Activated CD4-positive, alpha-beta memory T cell treated with anti-CD3 and anti-CD28 coated beads for 36 hours (primary cell): ENCODE measurements at regions of chr13 and their contacts with region 1.

Region 1: DNA sequence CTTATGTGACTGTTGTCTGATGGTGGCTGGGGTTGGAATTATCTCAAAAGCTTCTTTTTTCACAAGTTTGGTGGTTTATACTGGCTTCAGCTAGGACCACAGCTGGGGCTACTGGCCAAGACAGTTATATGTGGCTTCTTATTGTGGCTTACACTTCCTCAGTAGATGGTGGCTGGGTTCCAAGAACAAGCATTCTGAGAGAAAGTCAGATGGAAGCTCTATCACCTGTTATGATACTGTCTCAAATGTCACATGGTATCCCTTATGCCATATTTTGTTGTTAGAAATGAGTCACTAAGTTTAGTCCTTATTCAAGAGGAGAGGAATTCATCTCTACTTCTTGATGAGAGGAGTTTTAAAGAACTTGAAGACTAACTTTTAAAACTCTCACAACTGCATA is 41.6 kb downstream of the NDFIP2 start:
- DNase-seq: peak; percentile 55
- H3K4me3 Mint-ChIP-seq: peak overlapping the region; percentile 4
- H3K27ac Mint-ChIP-seq: peak overlapping the region; percentile 80
- H3K4me1 Mint-ChIP-seq: peaks cover 22% of the 10 kb centered on the region
- H3K27me3 Mint-ChIP-seq: no peaks in the 10 kb centered on the region

Region 2: GRCh38 chr13:78658635-78659449 is 863.7 kb before region 1 on chr13 and contains the start of gene OBI1:
- CTCF ChIA-PET with region 1: no interaction called
- POLR2A ChIA-PET with region 1: no interaction called
- intact Hi-C with region 1: loop called (anchors 5 kb)
- DNase-seq: peak; percentile 93
- H3K4me3 Mint-ChIP-seq: peak within 1 kb of the TSS; percentile 97
- H3K27ac Mint-ChIP-seq: peak within 1 kb of the TSS; percentile 91
- H3K4me1 Mint-ChIP-seq: peaks cover 29% of the 10 kb centered on the region
- H3K27me3 Mint-ChIP-seq: no peaks in the 10 kb centered on the region
- total RNA-seq, gene OBI1: 17.6 TPM

Region 3: DNA sequence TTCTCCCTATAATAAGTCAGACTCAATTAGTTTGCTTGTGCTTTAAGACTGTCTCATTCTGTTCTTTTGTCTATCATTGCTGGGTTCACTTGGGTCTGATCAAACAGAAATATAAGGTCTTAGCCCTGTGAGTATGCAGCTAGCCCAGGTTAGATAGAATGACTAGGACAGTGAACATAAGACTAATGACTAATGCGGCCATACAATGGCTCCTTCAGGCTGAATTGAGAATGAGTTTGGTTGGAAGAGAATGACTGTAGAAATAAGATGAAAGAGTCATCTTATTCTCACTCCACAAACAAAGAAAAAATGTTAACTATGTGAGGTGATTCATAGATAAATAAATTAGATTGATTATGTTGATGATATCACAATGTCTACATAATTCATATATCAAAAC is 813.6 kb before region 1 on chr13:
- CTCF ChIA-PET with region 1: no interaction called
- POLR2A ChIA-PET with region 1: no interaction called
- intact Hi-C with region 1: no loop called
- DNase-seq: no peak
- H3K4me3 Mint-ChIP-seq: no peak overlapping the region
- H3K27ac Mint-ChIP-seq: no peak overlapping the region
- H3K4me1 Mint-ChIP-seq: no peaks in the 10 kb centered on the region
- H3K27me3 Mint-ChIP-seq: peaks cover 11% of the 10 kb centered on the region

Region 4: GRCh38 chr13:78993792-78994191 is 528.8 kb before region 1 on chr13:
- CTCF ChIA-PET with region 1: no interaction called
- POLR2A ChIA-PET with region 1: no interaction called
- intact Hi-C with region 1: no loop called
- DNase-seq: no peak
- H3K4me3 Mint-ChIP-seq: no peak overlapping the region
- H3K27ac Mint-ChIP-seq: no peak overlapping the region
- H3K4me1 Mint-ChIP-seq: no peaks in the 10 kb centered on the region
- H3K27me3 Mint-ChIP-seq: peaks cover 6% of the 10 kb centered on the region

Region 5: DNA sequence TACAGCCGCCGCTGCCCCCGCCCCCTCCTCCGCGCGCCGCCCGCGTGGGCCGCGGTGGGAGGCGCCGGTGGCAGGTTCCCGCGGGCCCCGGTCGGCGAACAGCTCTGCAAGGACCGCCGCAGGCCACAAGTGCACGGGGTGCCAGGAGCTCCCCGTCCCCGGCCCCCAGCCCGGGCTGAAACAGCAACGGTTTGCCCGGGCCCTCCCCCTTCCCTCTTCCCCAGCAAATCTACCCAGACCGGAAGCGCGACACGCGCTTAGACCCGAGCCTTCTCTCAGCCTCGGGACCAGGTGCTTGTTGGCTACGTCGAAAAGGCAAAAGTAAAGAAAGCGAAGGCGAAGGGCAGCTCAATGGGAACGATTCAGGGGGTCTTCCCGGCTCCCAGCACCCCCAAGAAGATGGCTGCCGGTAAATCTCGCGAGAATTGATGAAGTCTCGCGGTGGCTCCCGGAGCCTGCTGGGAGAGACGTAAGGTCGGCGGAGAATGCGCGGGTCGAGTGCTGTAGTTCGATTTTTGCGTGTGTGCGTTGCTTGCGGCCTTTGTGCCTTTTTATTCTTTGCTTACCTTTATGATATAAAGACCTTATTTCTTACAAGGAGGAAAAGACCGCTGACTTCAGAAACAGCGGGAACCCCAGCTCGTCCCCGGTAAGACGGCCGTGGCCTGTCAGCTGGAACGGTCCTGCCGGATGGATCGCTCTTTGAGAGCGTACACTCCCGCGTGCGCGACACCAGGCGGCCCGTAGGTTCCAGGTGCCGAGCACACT is 116.6 kb before region 1 on chr13 and contains the start of gene RBM26:
- CTCF ChIA-PET with region 1: no interaction called
- POLR2A ChIA-PET with region 1: no interaction called
- intact Hi-C with region 1: loop called (anchors 5 kb)
- DNase-seq: peak; percentile 96
- H3K4me3 Mint-ChIP-seq: peak within 1 kb of the TSS; percentile 88
- H3K27ac Mint-ChIP-seq: no peak within 1 kb of the TSS
- H3K4me1 Mint-ChIP-seq: peaks cover 38% of the 10 kb centered on the region
- H3K27me3 Mint-ChIP-seq: no peaks in the 10 kb centered on the region
- total RNA-seq, gene RBM26: 54.8 to 57.7 TPM

Region 6: GRCh38 chr13:79451500-79451962 is 71.1 kb before region 1 on chr13:
- CTCF ChIA-PET with region 1: no interaction called
- POLR2A ChIA-PET with region 1: no interaction called
- intact Hi-C with region 1: loop called (anchors 1 kb)
- DNase-seq: peak; percentile 98
- H3K4me3 Mint-ChIP-seq: peak overlapping the region; percentile 74
- H3K27ac Mint-ChIP-seq: peak overlapping the region; percentile 97
- H3K4me1 Mint-ChIP-seq: peaks cover 84% of the 10 kb centered on the region
- H3K27me3 Mint-ChIP-seq: no peaks in the 10 kb centered on the region

Region 7: DNA sequence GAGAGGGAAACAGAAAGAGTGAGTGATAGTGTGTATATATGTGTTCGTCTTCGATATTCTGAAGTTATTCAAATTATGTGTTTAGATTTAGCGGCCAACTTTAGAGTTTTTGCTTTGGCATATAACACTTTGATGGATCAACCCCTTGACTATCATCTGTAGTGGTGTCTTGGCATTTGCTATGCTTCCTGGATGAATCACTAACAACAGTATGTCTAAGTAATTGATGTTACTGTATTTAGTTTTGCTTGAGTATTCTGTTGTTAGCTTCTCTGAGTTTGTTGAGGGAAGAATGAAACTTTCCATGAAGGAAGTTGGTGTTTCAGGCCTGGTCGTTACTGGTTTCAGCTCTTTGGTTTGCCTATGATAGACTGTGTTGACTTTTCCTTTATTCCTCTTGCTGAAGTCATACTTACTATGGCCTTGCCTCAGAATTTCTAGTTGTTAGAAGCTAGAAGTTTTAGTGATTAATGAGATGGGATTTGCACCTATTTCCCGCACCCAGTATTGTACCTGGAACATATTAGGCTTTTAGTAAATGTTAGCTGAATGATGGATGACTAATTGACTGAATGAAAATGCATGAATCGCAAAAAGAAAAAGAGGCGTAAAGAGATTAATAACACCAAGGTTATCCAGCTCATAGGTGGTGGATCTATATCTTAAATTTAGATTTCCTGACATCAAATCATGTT is 20.9 kb before region 1 on chr13:
- CTCF ChIA-PET with region 1: interaction called, 5 read pairs
- POLR2A ChIA-PET with region 1: interaction called, 3 read pairs
- intact Hi-C with region 1: loop called (anchors 1 kb)
- DNase-seq: no peak
- H3K4me3 Mint-ChIP-seq: no peak overlapping the region
- H3K27ac Mint-ChIP-seq: peak overlapping the region; percentile 74
- H3K4me1 Mint-ChIP-seq: peaks cover 83% of the 10 kb centered on the region
- H3K27me3 Mint-ChIP-seq: no peaks in the 10 kb centered on the region

Region 8: GRCh38 chr13:79541426-79542049 is 19.0 kb after region 1 on chr13:
- CTCF ChIA-PET with region 1: interaction called, 8 read pairs
- POLR2A ChIA-PET with region 1: no interaction called
- intact Hi-C with region 1: loop called (anchors 2 kb)
- DNase-seq: no peak
- H3K4me3 Mint-ChIP-seq: no peak overlapping the region
- H3K27ac Mint-ChIP-seq: no peak overlapping the region
- H3K4me1 Mint-ChIP-seq: peaks cover 6% of the 10 kb centered on the region
- H3K27me3 Mint-ChIP-seq: no peaks in the 10 kb centered on the region